Activated CD8-positive, alpha-beta memory T cell treated with anti-CD3 and anti-CD28 coated beads, Interleukin-2, amount 10 ng/mL, durations not matched to agents 7 days and 5 days (primary cell): ENCODE measurements at regions of chr1 and their contacts with region 1.

Region 1: DNA sequence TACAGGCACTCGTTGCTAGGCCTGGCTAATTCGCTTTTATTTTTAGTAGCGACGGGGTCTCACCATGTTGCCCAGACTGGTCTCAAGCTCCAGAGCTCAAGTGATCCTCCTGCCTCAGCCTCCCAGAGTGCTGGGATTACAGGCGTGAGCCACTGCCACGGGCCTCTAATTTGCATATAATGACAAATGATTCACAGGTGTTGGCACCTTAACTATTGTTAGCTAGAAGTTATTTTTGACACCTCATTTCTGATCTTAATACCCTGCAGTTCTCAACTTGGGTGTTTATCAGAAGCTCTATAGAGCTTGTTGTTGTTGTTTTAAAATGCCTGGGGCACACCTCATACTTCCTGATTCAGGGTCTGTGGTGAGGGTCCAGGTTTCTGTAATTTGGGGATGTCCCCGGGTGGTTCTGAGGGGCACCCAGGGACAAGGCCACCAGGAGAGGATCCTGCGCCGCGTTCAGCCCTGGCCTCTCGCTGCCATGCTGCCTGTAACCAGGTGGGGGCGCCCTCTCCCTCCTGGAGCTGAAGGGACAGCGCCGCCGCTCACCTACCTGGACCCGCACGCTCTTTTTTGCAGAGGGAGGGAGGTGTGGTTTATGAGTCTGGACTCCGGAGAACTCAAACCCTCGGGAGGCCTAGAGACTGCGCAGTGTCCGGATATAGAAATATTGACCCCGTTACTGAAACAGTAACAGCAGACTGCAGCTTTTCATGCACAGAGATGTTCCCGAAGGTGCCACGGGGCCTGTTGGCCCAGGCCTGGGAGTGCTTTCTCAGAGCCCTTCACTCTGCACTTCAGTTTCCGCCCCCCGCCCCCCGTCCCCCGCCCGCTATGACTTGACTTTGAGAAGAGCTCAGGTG is 23.0 kb upstream of the NEK2 start:
- DNase-seq: peak; percentile 89
- ATAC-seq: peak; percentile 93
- H3K4me3 Mint-ChIP-seq: peak overlapping the region; percentile 45
- H3K27ac Mint-ChIP-seq: no peak overlapping the region
- H3K4me1 Mint-ChIP-seq: peaks cover 48% of the 10 kb centered on the region
- H3K27me3 Mint-ChIP-seq: peaks cover 21% of the 10 kb centered on the region

Region 2: GRCh38 chr1:211675230-211676105 is 22.9 kb before region 1 on chr1 and contains the start of gene NEK2:
- CTCF ChIA-PET with region 1: interaction called, 86 read pairs
- DNase-seq: peak; percentile 96
- ATAC-seq: peak; percentile 96
- H3K4me3 Mint-ChIP-seq: peak within 1 kb of the TSS; percentile 97
- H3K27ac Mint-ChIP-seq: peak within 1 kb of the TSS; percentile 87
- H3K4me1 Mint-ChIP-seq: peaks cover 25% of the 10 kb centered on the region
- H3K27me3 Mint-ChIP-seq: peaks cover 3% of the 10 kb centered on the region
- total RNA-seq, gene NEK2: 42.5 to 48.4 TPM

Region 3: DNA sequence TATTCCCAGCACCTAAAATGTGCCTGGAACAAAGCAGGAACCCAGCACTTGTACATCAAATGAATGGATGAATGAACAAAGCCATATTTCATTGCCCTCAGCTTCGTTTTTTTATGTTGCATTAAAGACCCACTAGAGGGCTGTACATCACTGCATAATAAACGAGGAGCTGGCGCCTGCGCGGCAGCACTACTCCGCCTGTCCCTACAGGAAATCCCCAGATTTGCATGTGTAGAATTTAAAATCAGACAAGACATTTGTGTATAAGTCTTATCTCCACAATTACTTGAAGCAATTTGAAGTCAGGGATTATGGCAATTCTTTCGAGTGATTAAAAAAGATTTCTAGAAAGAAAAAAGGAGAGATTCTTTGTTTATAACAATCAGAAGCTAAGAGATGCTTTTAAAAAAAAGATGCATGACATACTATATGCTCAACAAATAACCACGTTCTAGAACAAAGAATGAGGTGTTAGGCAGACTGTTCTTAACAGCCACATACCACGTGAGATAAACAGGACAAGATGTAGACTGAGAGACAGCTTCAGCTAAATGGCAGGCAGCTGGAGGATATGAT is 17.6 kb before region 1 on chr1:
- CTCF ChIA-PET with region 1: interaction called, 86 read pairs
- DNase-seq: peak; percentile 83
- ATAC-seq: peak; percentile 95
- H3K4me3 Mint-ChIP-seq: no peak overlapping the region
- H3K27ac Mint-ChIP-seq: peak overlapping the region; percentile 67
- H3K4me1 Mint-ChIP-seq: peaks cover 9% of the 10 kb centered on the region
- H3K27me3 Mint-ChIP-seq: peaks cover 3% of the 10 kb centered on the region

Region 4: DNA sequence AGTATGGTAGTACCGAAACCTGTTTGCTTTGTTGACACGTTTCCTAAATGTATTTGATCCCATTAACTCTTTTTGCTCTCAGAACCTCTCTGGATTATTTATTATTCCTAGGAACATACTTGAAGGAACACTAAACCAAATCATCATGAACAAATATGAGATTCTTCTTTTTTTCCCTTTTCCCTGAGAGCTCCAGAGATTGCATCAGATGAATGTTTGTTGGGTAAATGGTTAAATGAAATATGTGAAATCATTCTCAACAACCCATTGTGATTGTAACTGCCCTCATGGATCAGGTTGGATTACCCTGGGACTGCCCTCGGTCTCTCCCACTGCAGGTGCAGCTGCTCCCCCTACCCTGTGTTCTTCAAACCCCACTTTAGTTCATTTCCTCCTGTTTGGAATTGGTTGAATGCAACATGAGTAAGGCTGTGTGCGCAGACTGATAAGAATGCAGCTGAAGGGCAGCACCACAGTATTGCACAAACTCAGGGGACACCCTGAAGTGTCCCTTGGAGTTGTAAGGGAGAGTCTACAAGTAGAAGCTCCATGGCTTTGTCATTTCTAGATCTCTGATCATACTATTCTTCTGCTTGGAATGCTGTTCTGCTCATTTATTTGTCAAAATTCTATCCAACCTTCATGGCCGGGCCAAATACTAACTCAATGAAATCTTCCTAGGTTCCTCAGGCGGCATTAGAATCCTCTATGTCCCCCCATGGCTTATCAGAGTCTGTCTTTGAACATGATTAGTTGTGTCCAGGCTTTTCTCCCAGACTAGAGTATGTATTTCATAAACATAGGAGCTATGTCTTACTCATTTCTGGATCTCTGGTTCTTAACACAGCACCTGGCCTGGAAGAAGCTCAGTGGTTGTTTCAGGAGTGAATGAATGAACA is 24.1 kb after region 1 on chr1:
- CTCF ChIA-PET with region 1: interaction called, 12 read pairs
- DNase-seq: no peak
- ATAC-seq: no peak
- H3K4me3 Mint-ChIP-seq: no peak overlapping the region
- H3K27ac Mint-ChIP-seq: no peak overlapping the region
- H3K4me1 Mint-ChIP-seq: no peaks in the 10 kb centered on the region
- H3K27me3 Mint-ChIP-seq: peaks cover 1% of the 10 kb centered on the region

Region 5: DNA sequence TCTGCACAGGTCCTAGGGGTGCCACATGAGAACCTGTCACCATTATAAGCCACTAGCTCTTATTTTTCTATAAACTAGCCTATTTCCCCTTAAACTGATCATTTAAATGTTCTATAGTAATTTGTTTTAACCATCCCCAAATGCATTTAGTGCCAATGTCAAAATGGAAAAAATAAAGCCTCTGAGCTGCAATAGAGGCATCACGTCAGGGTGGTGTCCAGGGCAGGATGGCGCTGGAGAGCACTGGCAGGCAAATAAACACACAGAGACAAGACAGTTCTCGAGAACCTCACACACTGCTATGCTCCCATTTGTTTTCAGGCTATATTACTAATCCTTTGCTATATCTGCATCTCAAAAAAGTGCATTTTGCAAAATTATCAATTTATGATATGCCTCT is 50.4 kb after region 1 on chr1:
- CTCF ChIA-PET with region 1: no interaction called
- DNase-seq: no peak
- ATAC-seq: no peak
- H3K4me3 Mint-ChIP-seq: no peak overlapping the region
- H3K27ac Mint-ChIP-seq: no peak overlapping the region
- H3K4me1 Mint-ChIP-seq: peaks cover 2% of the 10 kb centered on the region
- H3K27me3 Mint-ChIP-seq: no peaks in the 10 kb centered on the region

Region 6: GRCh38 chr1:211830330-211831142 is 132.1 kb after region 1 on chr1 and contains the start of gene LPGAT1:
- CTCF ChIA-PET with region 1: interaction called, 21 read pairs
- DNase-seq: peak; percentile 77
- ATAC-seq: peak; percentile 81
- H3K4me3 Mint-ChIP-seq: peak within 1 kb of the TSS; percentile 86
- H3K27ac Mint-ChIP-seq: peak within 1 kb of the TSS; percentile 87
- H3K4me1 Mint-ChIP-seq: peaks cover 57% of the 10 kb centered on the region
- H3K27me3 Mint-ChIP-seq: no peaks in the 10 kb centered on the region
- total RNA-seq, gene LPGAT1: 23.8 to 42.7 TPM

Region 7: DNA sequence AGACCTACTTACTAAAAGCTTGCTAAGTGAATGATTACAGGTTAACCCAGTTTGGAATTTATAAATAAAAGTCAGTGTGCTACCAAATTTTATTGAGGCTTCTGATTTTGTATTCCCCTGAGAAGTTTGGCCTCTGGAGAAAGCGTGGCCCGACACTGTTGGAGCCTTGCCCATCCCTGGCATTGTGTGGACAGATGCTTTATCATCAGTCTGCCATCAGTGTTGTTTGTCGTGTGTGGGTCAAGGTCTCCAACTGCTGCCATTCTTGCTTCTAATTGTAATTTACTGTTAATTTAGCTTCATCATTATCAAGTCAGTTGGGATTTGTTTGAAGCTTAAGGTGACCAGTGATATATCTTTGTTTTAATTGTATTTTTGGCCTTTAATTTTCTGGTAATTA is 194.2 kb after region 1 on chr1:
- CTCF ChIA-PET with region 1: interaction called, 10 read pairs
- DNase-seq: no peak
- ATAC-seq: no peak
- H3K4me3 Mint-ChIP-seq: no peak overlapping the region
- H3K27ac Mint-ChIP-seq: no peak overlapping the region
- H3K4me1 Mint-ChIP-seq: peaks cover 5% of the 10 kb centered on the region
- H3K27me3 Mint-ChIP-seq: peaks cover 15% of the 10 kb centered on the region

Region 8: DNA sequence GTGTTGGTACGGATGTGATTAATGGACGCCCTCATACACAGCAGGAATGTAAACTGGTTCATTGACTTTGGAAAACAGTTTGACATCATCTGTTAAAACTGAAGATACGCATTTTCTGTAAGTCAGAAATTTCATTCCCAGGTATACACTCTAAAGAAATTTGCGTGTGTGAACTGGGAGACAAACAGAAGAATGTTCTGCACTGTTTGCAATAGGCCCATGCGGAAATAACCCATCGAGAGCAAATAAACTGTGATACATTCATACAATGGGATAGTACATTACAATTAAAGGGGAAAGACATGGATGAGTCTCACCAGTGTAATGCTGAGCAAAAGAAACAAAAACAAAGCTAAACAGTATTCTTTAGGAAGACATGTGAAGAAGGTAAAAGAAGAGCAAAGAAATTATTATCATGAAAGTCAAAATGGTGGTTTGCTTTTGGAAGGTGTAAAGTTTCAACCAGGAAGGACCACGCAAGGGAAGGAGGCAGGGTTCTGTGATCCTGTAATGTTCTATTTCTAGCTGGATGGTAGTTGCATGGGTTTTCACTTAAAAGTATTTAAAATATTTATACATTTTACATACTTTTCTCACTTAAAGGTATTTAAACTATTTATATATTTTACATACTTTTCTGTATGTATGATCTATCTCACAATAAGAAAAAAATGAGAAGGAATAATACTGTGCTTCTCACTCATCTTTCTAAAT is 306.7 kb after region 1 on chr1:
- CTCF ChIA-PET with region 1: interaction called, 11 read pairs
- DNase-seq: no peak
- ATAC-seq: no peak
- H3K4me3 Mint-ChIP-seq: no peak overlapping the region
- H3K27ac Mint-ChIP-seq: no peak overlapping the region
- H3K4me1 Mint-ChIP-seq: peaks cover 5% of the 10 kb centered on the region
- H3K27me3 Mint-ChIP-seq: no peaks in the 10 kb centered on the region